Thyroid gland (tissue), 4 donors: ENCODE measurements at regions of chr12 and their contacts with region 1.

Region 1: DNA sequence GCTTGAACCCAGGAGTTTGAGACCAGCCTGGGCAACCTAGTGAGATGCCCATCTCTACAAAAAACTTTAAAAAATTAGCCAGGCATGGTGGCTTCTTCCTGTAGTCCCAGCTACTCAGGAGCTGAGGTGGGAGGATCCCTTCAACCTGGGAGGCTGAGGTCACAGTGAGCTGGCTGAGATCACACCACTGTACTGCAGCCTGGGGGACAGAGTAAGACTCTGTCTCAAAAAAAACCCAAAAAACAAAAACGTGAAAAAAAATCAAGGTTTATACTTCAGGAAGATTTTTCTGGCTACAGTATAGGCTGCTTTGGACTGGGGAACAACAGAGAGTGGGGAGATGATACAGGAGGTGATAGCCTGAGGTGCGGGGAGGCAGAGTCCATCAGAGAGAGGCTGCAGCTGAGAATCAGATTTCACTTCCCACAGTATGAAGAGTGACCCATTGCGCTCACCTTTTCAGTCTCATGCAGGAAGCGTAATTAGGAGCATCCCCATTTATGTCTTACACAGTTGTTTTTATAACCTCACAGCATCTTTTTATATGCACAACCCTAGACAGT is 28.9 kb downstream of the DNAH10 start:
- DNase-seq: no peak
- H3K4me3 ChIP-seq: no peak overlapping the region
- H3K27ac ChIP-seq: no peak overlapping the region
- H3K4me1 ChIP-seq: no peaks in the 10 kb centered on the region
- H3K27me3 ChIP-seq: no peaks in the 10 kb centered on the region
- CTCF ChIP-seq: no peak
- POLR2A ChIP-seq: no peak

Region 2: DNA sequence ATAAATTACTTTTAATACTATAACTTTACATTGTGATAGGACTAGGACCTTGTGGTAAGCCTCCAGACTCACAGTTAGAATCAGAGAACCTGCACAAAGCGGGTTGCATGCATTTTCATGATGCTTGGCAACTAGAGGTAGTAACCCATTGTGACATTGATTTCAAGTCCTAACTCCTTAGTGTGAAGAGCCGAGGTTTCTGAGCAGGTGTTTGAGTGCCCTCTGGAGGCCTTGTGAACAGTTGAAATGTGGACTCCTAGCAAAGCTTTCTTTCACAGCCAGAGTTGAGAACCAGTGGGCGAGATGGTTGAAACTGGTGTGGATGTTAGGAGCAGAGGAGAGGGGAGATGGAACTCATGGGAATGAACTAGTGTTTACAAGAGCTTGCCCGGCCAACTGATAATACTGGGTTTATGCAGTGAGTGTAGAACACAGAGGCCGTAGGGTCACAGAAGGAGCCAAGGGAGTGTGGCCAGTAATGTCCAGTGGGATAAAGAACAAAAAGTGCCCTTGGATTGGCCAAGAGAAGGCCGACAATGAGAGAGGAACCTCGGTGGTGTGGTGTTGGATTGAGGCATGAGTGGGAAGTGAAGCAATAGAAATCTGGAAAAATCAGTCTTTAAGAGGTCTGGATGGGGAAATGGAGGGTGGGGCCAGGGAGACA is 193.0 kb after region 1 on chr12:
- intact Hi-C with region 1: loop called (anchors 10 kb)
- DNase-seq: peak; percentile 55 to 60
- H3K4me3 ChIP-seq: no peak overlapping the region
- H3K27ac ChIP-seq: peak overlapping the region in 2 of 3 donors; percentile 30 to 87
- H3K4me1 ChIP-seq: peaks cover 16 to 51% of the 10 kb centered on the region in 2 donors
- H3K27me3 ChIP-seq: no peaks in the 10 kb centered on the region
- CTCF ChIP-seq: peak in 5 of 6 experiments; percentile 48 to 83 (median 73)
- POLR2A ChIP-seq: no peak

Region 3: GRCh38 chr12:124422570-124423523 is 631.9 kb after region 1 on chr12:
- intact Hi-C with region 1: no loop called
- DNase-seq: peak; percentile 93 to 96
- H3K4me3 ChIP-seq: peak overlapping the region in 1 of 3 donors; percentile 8
- H3K27ac ChIP-seq: peak overlapping the region; percentile 81 to 94 (median 82)
- H3K4me1 ChIP-seq: peaks cover 21 to 42% of the 10 kb centered on the region in 2 donors
- H3K27me3 ChIP-seq: no peaks in the 10 kb centered on the region
- CTCF ChIP-seq: peak in 1 of 6 experiments; percentile 21
- POLR2A ChIP-seq: no peak